ENCODE measurements at regions of chr19 and their contacts with region 1.

Region 1: DNA sequence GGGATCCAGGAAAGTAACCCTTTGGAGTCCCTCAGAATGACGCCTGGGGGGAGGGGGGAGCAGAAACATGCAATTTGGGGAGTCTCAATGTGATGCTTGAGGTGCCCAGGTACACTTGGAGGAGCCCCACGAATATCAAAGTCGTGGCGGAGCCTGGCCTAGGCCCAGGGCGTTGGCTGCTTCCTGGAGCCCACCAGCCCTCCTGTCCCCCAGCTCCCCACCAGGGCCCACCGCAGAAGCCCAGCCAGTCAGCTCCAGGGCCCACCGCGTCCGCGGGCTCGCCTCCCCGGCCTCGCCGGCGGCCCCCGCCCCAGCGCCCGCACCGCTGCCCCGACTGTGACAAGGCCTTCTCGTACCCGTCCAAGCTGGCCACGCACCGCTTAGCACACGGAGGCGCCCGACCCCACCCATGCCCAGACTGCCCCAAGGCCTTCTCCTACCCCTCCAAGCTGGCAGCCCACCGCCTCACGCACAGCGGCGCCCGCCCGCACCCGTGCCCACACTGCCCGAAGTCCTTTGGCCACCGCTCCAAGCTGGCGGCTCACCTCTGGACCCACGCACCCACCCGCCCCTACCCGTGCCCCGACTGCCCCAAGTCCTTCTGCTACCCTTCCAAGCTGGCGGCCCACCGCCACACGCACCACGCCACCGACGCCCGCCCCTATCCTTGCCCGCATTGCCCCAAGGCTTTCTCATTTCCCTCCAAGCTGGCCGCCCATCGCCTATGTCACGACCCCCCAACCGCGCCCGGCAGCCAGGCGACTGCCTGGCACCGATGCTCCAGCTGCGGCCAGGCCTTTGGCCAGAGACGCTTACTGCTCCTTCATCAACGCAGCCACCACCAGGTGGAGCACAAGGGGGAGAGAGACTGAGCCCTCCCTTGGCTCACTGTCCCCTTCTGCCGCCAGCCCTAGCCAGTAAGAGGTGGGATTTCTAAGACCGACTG is 2.1 kb downstream of the ZNF575 start:
- DNase-seq: no peak
- H3K4me3 ChIP-seq: peak overlapping the region; percentile 51 to 75 (median 62)
- H3K27ac ChIP-seq: peak overlapping the region; percentile 88 to 94 (median 92)
- H3K4me1 ChIP-seq: peaks cover 26 to 40% (median 38%) of the 10 kb centered on the region in 4 donors
- H3K27me3 ChIP-seq: no peaks in the 10 kb centered on the region
- CTCF ChIP-seq: peak; percentile 55 to 70 (median 70)
- EP300 ChIP-seq: no peak
- POLR2A ChIP-seq: no peak

Region 2: GRCh38 chr19:43474986-43475705 is 59.9 kb before region 1 on chr19:
- intact Hi-C with region 1: no loop called
- DNase-seq: peak; percentile 99
- H3K4me3 ChIP-seq: peak overlapping the region; percentile 49 to 56 (median 52)
- H3K27ac ChIP-seq: peak overlapping the region; percentile 79 to 84 (median 84)
- H3K4me1 ChIP-seq: peaks cover 11 to 26% (median 16%) of the 10 kb centered on the region in 4 donors
- H3K27me3 ChIP-seq: no peaks in the 10 kb centered on the region
- CTCF ChIP-seq: no peak
- EP300 ChIP-seq: peak; percentile 70
- POLR2A ChIP-seq: no peak

Region 3: GRCh38 chr19:43575156-43575950 is 40.3 kb after region 1 on chr19 and contains the starts of genes PINLYP and XRCC1:
- intact Hi-C with region 1: loop called (anchors 5 kb)
- DNase-seq: peak; percentile 99
- H3K4me3 ChIP-seq: peak within 1 kb of the TSS; percentile 71 to 84 (median 78)
- H3K27ac ChIP-seq: peak within 1 kb of the TSS; percentile 82 to 89 (median 87)
- H3K4me1 ChIP-seq: peaks cover 13 to 36% (median 32%) of the 10 kb centered on the region in 4 donors
- H3K27me3 ChIP-seq: no peaks in the 10 kb centered on the region
- CTCF ChIP-seq: no peak
- EP300 ChIP-seq: no peak
- POLR2A ChIP-seq: peak; percentile 51
- total RNA-seq, gene PINLYP: 3.3 to 6.2 (median 4.9) TPM
- total RNA-seq, gene XRCC1: 21.2 to 27.2 (median 24.4) TPM

Region 4: DNA sequence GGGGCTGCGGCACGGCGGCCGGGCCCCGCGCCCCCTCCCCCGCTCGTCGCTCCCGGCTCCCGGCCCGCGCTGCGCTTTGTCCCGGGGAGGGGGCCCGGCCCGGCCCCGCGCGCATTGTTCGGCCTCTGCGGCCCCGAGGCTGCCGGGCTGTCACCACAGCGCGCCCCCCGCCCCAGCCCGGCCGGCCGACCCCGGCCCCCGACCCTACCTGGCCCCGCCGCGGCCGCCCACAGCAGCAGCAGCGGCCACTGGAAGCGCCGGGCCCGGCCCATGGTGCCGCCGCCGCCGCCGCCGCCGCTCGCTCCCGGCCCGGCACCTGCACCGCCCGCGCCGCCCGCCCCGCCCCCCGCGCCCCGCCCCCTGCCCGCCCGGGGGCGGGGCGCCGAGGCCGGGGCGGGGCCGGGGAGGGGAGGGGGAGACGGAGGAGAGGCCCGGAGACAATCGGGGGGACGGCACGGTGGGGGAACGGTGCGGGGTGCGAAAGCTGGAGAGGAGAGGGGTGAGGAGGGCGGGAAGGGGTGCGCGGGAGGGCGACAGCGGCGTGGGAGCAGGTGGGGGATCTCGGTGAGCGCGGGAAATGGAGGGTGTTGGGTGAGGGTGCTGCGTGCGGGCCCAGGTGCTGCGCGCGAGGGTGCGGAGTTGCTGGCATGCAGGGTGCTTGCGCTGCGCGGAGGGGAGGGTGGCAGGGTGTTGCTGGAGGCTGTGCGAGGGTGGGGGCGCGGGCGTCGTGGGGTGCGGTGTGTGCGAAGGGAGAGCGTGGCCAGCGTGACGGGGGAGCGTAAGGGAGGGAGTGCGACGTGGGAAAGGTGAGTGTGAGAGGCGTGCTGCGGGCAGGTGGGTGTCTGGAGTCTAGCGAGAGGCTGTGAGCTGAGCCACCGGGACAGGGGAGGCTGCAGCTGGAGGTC is 104.7 kb after region 1 on chr19 and contains the start of gene CADM4:
- intact Hi-C with region 1: no loop called
- DNase-seq: no peak
- H3K4me3 ChIP-seq: peak within 1 kb of the TSS; percentile 62 to 81 (median 72)
- H3K27ac ChIP-seq: peak within 1 kb of the TSS; percentile 62 to 81 (median 76)
- H3K4me1 ChIP-seq: peaks cover 13 to 48% (median 37%) of the 10 kb centered on the region in 4 donors
- H3K27me3 ChIP-seq: no peaks in the 10 kb centered on the region
- CTCF ChIP-seq: no peak
- EP300 ChIP-seq: no peak
- POLR2A ChIP-seq: no peak
- total RNA-seq, gene CADM4: 31.6 to 67.9 (median 46.9) TPM

Region 5: GRCh38 chr19:43651758-43652545 is 116.9 kb after region 1 on chr19:
- intact Hi-C with region 1: loop called (anchors 5 kb)
- DNase-seq: no peak
- H3K4me3 ChIP-seq: no peak overlapping the region
- H3K27ac ChIP-seq: peak overlapping the region in 3 of 4 donors; percentile 9 to 58 (median 33)
- H3K4me1 ChIP-seq: peaks cover 0 to 12% (median 9%) of the 10 kb centered on the region in 4 donors
- H3K27me3 ChIP-seq: no peaks in the 10 kb centered on the region
- CTCF ChIP-seq: peak; percentile 75 to 82 (median 82)
- EP300 ChIP-seq: no peak
- POLR2A ChIP-seq: no peak

Region 6: GRCh38 chr19:43711751-43712355 is 176.8 kb after region 1 on chr19:
- intact Hi-C with region 1: no loop called
- DNase-seq: no peak
- H3K4me3 ChIP-seq: no peak overlapping the region
- H3K27ac ChIP-seq: no peak overlapping the region
- H3K4me1 ChIP-seq: no peaks in the 10 kb centered on the region
- H3K27me3 ChIP-seq: peaks cover 0 to 21% (median 0%) of the 10 kb centered on the region in 4 donors
- CTCF ChIP-seq: no peak
- EP300 ChIP-seq: no peak
- POLR2A ChIP-seq: no peak